Panc1 (cell line): ENCODE measurements at regions of chr20 and their contacts with region 1.

Region 1: GRCh38 chr20:58179432-58180099 is 48.9 kb downstream of the ANKRD60 start:
- DNase-seq: no peak
- ATAC-seq: peak; percentile 92
- H3K4me3 ChIP-seq: peak overlapping the region; percentile 30 to 56
- H3K27ac ChIP-seq: peak overlapping the region; percentile 71
- H3K4me1 ChIP-seq: peaks cover 3% of the 10 kb centered on the region; the same call in 1 of the 2 replicates
- H3K27me3 ChIP-seq: no peaks in the 10 kb centered on the region
- CTCF ChIP-seq: peak; percentile 98

Region 2: GRCh38 chr20:57628047-57628961 is 551.3 kb before region 1 on chr20:
- CTCF ChIA-PET with region 1: no interaction called
- POLR2A ChIA-PET with region 1: no interaction called
- in situ Hi-C with region 1: loop called (anchors 25 kb)
- intact Hi-C with region 1: no loop called
- DNase-seq: no peak
- ATAC-seq: no peak
- H3K4me3 ChIP-seq: no peak overlapping the region
- H3K27ac ChIP-seq: no peak overlapping the region
- H3K4me1 ChIP-seq: no peaks in the 10 kb centered on the region
- H3K27me3 ChIP-seq: no peaks in the 10 kb centered on the region
- CTCF ChIP-seq: no peak